ENCODE measurements at regions of chr7 and their contacts with region 1.

Region 1: GRCh38 chr7:155769701-155770100 is 42.6 kb downstream of the SHH start:
- DNase-seq: no peak
- CTCF ChIP-seq: no peak

Region 2: GRCh38 chr7:155738652-155739537 is 30.8 kb before region 1 on chr7:
- CTCF ChIA-PET with region 1: interaction called, 12 read pairs
- POLR2A ChIA-PET with region 1: no interaction called
- DNase-seq: peak; percentile 42
- CTCF ChIP-seq: peak; percentile 76

Region 3: GRCh38 chr7:155746188-155746587 is 23.5 kb before region 1 on chr7:
- CTCF ChIA-PET with region 1: interaction called, 12 read pairs
- POLR2A ChIA-PET with region 1: no interaction called
- DNase-seq: no peak
- CTCF ChIP-seq: no peak

Region 4: DNA sequence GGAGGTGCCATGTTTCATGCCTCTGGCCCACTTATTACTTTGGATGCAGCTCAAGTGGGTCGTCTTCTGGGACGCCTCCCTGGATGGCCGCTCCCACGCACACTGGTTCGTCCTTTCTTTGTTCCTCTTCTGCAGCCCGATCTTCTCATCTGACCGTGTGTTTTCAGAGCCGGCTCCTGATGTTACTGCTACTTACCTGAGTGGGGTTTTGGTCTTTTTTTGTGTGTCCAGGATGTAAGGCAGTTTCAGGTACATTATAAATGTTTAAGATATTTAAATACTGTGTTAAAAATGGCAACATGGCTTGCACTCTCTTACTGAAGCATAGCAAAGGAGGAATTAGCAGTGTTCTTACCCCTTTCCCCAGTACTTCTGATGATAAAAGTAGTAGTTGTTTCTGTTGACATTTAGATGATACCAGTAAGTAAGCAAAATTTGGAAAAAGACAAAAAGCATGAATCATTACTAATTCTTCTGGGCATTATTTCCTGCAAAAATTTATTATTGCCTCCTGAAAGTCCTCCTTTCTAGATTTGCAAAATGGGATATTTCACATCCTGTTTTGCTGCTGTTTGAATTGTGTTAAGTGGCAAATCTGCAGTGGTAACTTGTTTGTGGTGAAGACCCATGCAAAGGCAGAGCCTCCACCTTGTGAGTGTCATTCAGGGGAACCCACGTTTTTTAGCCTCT is 16.8 kb before region 1 on chr7:
- CTCF ChIA-PET with region 1: interaction called, 18 read pairs
- POLR2A ChIA-PET with region 1: no interaction called
- DNase-seq: peak; percentile 57
- CTCF ChIP-seq: no peak